CD8-positive, alpha-beta T cell (primary cell): ENCODE measurements at regions of chr17 and their contacts with region 1.

Region 1: DNA sequence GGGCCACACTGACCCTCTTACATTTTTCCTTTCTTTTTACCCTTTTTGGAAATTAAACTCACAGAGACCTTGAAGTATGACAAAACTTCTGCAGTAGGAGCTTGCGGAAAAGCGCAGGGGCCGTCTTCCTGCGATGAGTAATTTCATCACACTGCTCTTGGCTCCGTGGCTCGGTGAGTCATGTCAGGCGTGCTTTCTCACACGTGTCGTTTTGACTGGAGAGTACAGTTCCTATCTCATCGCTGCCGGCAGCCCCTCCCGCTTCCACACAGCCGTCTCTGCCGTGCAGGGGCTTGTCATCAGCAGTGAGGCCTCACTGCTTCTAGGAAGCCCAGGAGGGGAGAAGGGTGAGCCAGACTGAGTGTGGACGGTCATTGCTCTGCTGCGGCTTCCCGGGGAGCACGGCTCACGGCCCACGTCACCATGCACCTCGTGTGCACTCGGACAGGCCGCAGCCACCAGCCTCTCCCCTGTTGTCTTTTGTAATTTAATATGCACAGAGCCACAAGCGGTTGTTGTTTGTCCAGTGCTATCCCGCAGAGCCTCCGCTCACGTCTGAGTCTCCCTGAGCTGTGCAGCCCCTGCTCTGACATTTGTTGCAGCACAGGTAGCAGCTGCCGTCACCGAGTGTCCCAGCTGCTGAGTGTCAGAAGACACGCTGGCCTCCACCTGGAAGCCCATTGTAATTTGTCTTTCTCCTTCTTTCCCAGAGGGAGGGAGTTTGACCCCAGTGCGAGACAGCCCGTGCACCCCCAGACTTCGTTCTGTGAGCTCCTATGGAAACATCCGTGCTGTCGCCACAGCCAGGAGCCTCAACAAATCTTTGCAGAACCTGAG is 99.4 kb upstream of the CHMP6 start:
- DNase-seq: peak; percentile 55 to 94 (median 74)
- ATAC-seq: peak; percentile 83
- H3K4me3 ChIP-seq: peak overlapping the region in 1 of 2 experiments; percentile 21
- H3K4me3 Mint-ChIP-seq: peak overlapping the region; percentile 68
- H3K27ac ChIP-seq: peak overlapping the region; percentile 47 to 89
- H3K27ac Mint-ChIP-seq: peak overlapping the region; percentile 96
- H3K4me1 ChIP-seq: peaks cover 32% of the 10 kb centered on the region
- H3K4me1 Mint-ChIP-seq: peaks cover 41% of the 10 kb centered on the region
- H3K27me3 ChIP-seq: no peaks in the 10 kb centered on the region
- H3K27me3 Mint-ChIP-seq: no peaks in the 10 kb centered on the region
- CTCF ChIP-seq: no peak

Region 2: GRCh38 chr17:80720610-80721577 is 171.3 kb before region 1 on chr17:
- CTCF ChIA-PET with region 1: no interaction called
- POLR2A ChIA-PET with region 1: interaction called, 3 read pairs
- intact Hi-C with region 1: loop called in 1 of 2 experiments (anchors 1 kb)
- DNase-seq: peak; percentile 8 to 90 (median 63)
- ATAC-seq: peak; percentile 83
- H3K4me3 ChIP-seq: peak overlapping the region in 1 of 2 experiments; percentile 22
- H3K4me3 Mint-ChIP-seq: peak overlapping the region; percentile 68
- H3K27ac ChIP-seq: peak overlapping the region; percentile 32 to 83
- H3K27ac Mint-ChIP-seq: peak overlapping the region; percentile 93
- H3K4me1 ChIP-seq: peaks cover 23% of the 10 kb centered on the region
- H3K4me1 Mint-ChIP-seq: peaks cover 52% of the 10 kb centered on the region
- H3K27me3 ChIP-seq: no peaks in the 10 kb centered on the region
- H3K27me3 Mint-ChIP-seq: no peaks in the 10 kb centered on the region
- CTCF ChIP-seq: no peak

Region 3: DNA sequence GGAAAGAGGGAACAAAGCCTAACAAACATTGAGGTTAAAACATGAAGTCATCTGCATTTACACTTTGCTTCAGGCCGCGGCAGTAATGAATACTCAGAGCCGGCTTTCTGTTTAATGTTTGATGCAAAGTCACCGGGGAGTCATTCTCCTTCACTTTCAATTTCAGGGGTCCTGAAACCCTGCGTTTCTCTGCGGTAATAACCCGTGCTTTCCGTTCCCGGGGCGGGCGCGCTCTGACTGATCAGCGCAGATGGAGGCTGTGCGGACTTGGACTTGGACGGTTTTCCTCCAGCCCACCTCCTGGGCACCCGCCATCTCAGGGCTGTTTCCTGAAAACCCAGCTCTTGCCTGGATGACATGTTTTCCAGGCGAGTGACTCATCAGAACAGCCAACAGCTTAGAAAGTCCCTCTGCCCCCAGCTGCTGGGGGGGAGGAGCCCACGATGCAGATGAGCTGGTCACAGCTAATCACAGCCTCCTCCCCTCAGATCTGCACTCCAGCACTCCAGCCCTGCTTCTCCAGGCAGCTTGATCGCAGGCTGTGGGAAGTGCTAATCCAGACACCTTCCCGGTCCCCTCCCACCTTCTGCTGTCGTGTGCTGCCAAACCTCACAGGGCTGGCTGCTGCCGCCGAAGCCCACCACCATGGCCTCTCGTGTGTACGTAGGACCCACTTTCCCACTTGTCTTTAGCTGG is 59.2 kb before region 1 on chr17:
- CTCF ChIA-PET with region 1: no interaction called
- POLR2A ChIA-PET with region 1: no interaction called
- intact Hi-C with region 1: loop called in 1 of 2 experiments (anchors 2 kb)
- DNase-seq: peak; percentile 30 to 89 (median 75)
- ATAC-seq: peak; percentile 92
- H3K4me3 ChIP-seq: peak overlapping the region; percentile 51 to 68
- H3K4me3 Mint-ChIP-seq: peak overlapping the region; percentile 92
- H3K27ac ChIP-seq: peak overlapping the region; percentile 77 to 84
- H3K27ac Mint-ChIP-seq: peak overlapping the region; percentile 96
- H3K4me1 ChIP-seq: peaks cover 19% of the 10 kb centered on the region
- H3K4me1 Mint-ChIP-seq: peaks cover 27% of the 10 kb centered on the region
- H3K27me3 ChIP-seq: no peaks in the 10 kb centered on the region
- H3K27me3 Mint-ChIP-seq: no peaks in the 10 kb centered on the region
- CTCF ChIP-seq: no peak

Region 4: GRCh38 chr17:80876950-80877728 is 15.1 kb before region 1 on chr17:
- CTCF ChIA-PET with region 1: interaction called, 3 read pairs
- POLR2A ChIA-PET with region 1: interaction called, 5 read pairs
- intact Hi-C with region 1: loop called in 1 of 2 experiments (anchors 2 kb)
- DNase-seq: peak in 4 of 9 experiments; percentile 20 to 73 (median 50)
- ATAC-seq: peak; percentile 77
- H3K4me3 ChIP-seq: peak overlapping the region; percentile 21 to 29
- H3K4me3 Mint-ChIP-seq: peak overlapping the region; percentile 76
- H3K27ac ChIP-seq: peak overlapping the region; percentile 4 to 11
- H3K27ac Mint-ChIP-seq: peak overlapping the region; percentile 71
- H3K4me1 ChIP-seq: peaks cover 36% of the 10 kb centered on the region
- H3K4me1 Mint-ChIP-seq: peaks cover 35% of the 10 kb centered on the region
- H3K27me3 ChIP-seq: no peaks in the 10 kb centered on the region
- H3K27me3 Mint-ChIP-seq: no peaks in the 10 kb centered on the region
- CTCF ChIP-seq: no peak